GM13977 (cell line): ENCODE measurements at regions of chr3 and their contacts with region 1.

Region 1: GRCh38 chr3:97793420-97794019 is 28.3 kb upstream of the CRYBG3 start:
- DNase-seq: peak; percentile 13
- CTCF ChIP-seq: peak; percentile 83

Region 2: DNA sequence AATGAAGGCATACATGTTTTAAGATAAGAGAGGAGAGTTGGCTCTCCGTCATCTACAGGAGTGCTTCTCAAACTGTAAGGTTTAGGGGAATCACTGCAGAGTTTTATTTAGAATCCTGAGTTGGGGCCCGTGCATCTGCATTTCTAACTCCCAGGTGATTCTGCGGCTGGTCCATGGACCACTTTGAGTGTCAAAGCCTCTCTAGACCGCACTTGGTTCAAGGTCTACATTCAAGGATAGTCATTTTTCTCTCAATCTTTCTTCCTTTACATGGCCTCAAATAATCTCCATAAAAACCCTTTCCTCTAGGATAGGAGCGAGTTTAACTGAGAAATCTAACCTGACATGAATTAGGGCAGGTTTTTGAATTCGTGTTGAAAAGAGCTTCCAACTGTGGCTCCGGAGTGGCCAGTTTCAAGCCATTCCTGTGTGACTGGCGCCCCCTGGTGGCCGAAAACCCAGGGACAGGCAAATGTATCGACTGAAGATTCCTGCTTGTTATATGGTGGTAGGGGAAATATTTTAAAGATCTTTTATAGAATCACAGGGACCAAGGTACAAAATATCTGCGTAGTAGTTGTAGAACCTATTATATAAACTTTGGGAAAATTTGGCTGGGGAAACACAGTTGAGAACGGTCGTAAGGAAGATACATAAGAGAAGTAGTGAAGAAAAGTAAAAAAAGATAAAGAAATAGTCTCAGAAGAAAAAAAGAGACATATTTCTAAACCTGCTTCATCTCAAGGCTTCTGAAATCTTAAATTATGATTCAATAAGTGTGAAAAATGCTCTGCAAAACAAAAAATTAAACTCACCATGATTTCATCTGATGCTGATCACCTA is 229.7 kb after region 1 on chr3:
- in situ Hi-C with region 1: loop called (anchors 5 kb)
- DNase-seq: peak; percentile 22
- CTCF ChIP-seq: peak; percentile 93

Region 3: DNA sequence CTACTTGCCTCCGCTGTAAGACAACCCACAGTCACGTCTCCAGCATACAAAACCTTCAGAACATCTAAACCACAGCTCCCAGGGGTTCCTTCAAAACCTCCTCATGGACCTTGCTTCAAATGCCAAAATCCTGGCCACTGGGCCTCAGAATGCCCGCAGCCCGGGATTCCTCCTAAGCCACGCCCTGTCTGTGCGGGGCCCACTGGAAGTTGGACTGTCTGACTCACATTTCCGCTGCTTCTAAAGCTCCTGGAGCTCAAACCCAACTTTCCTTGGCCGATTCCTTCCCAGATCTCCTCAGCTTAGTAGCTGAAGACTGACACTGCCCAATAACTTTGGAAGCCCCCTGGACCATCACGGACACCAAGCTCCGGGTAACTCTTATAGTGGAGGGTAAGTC is 452.6 kb after region 1 on chr3:
- in situ Hi-C with region 1: no loop called
- DNase-seq: no peak
- CTCF ChIP-seq: no peak

Region 4: DNA sequence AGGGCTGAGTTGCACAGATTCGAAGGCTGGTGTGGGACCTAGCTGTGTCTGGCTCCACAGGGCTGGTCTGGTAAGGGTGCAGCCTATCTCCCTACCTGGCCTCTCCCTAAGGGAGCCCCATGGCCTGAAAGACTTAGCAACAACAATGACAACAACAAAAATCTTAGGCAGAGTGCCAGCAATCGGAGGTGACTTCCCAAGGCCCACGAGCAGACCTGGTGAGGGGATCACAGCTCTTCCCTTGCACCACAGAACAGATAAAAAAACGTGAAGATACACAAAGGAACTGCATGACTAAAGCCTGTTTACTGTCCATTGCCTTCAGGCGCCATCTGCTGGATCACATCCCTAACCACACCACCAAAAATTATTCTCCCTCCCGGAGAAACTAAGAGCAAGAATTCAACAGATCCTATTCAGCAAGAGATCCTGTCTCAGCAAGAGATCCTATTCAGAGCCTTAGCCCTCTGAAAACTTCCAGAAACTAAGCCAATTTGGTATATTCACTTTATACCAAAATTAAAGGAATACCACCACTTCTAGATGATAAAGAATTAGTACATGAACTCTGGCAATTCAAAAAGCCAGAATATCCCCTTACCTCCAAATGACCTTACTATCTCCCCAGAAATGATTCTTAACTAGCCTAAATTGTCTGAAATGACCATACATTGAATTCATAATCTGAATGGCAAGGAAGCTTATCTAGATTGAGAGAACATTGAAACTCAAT is 536.0 kb after region 1 on chr3:
- in situ Hi-C with region 1: loop called (anchors 25 kb)
- DNase-seq: peak; percentile 29
- CTCF ChIP-seq: peak; percentile 75